ENCODE measurements at regions of chr17 and their contacts with region 1.

Region 1: GRCh38 chr17:59668816-59669215 is 38.4 kb downstream of the PTRH2 start:
- DNase-seq: no peak
- ATAC-seq: peak in 3 of 8 donors; percentile 29 to 63 (median 35)
- H3K4me3 ChIP-seq: no peak overlapping the region
- H3K27ac ChIP-seq: peak overlapping the region in 4 of 10 donors; percentile 8 to 60 (median 36)
- H3K4me1 ChIP-seq: peaks cover 0 to 48% (median 17%) of the 10 kb centered on the region in 9 donors
- H3K27me3 ChIP-seq: no peaks in the 10 kb centered on the region
- CTCF ChIP-seq: no peak

Region 2: DNA sequence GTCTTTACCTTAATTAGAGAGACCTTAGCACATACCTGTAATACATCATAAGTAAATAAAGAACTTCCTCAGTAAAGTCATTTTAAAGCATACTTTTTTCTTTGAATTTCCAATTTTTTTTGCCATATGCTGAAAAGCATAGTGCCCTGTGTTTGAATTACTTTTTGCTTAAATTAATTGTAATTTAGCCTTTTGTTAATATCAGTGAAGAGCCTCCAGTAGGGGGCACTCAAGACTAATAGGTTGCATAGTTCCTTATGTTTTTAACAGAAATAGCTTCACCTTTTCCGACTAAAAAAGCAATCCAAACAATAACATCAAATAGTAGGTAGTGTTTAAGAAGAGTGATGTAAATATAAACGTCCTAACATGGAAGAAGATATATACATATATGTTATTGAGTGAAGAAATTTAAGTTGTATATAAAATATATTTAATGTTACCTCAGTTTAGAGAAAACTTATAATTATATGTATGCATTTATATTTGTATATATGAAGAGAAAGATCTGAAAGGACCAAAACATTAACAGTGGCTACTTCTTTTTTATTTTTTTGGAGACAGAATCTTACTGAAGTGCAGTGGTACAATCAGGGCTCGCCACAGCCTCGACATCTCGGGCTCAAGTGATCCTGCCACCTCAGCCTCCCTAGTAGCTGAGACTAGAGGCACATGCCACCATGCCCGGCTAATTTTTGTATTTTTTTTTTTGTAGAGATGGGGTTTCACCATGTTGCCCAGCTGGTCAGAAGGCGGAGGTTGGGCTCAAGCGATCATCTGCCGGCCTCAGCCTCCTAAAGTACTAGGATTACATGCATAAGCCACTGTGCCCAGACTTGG is 957.7 kb before region 1 on chr17:
- intact Hi-C with region 1: loop called in 1 of 10 experiments (anchors 5 kb)
- DNase-seq: peak in 1 of 2 donors; percentile 21
- ATAC-seq: no peak
- H3K4me3 ChIP-seq: no peak overlapping the region
- H3K27ac ChIP-seq: no peak overlapping the region
- H3K4me1 ChIP-seq: no peaks in the 10 kb centered on the region
- H3K27me3 ChIP-seq: no peaks in the 10 kb centered on the region
- CTCF ChIP-seq: peak; percentile 40 to 83 (median 74)

Region 3: GRCh38 chr17:59651346-59651745 is 17.5 kb before region 1 on chr17:
- intact Hi-C with region 1: loop called in 1 of 10 experiments (anchors 1 kb)
- DNase-seq: no peak
- ATAC-seq: no peak
- H3K4me3 ChIP-seq: no peak overlapping the region
- H3K27ac ChIP-seq: no peak overlapping the region
- H3K4me1 ChIP-seq: peaks cover 0 to 19% (median 8%) of the 10 kb centered on the region in 9 donors
- H3K27me3 ChIP-seq: no peaks in the 10 kb centered on the region
- CTCF ChIP-seq: no peak

Region 4: DNA sequence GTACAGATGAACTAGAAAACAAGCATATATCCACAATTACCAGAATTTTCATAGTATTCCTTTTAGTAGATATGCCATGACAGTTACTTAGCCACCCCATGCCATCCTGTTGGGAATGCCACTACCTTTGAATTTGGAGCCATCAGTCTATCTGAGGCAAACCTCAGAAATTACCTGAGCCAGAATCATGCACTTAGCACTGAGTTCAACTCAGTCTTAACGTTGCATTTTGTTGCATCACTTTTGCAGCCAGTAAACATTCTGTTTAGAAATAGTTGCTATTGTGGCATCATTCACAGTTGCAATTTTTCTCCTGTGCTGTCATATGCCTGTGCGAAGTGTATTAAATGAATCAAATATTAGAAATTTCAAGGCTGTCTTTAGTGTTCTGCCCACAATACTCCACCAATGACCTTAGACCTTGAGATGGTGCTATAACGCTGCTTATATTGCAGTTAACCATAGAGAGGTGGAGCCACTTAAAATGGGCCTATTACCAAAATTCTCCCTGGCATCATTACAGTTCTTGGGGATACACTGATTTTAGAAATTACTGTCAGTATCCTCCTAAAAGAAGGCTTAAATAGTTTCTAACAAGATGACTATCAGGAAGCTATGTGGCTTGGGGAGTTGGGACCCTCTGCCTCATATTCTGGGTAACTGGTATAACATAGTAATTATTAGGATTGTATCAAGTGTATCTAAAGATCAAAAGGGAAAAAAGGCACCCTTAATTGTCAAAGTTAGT is 27.3 kb after region 1 on chr17:
- intact Hi-C with region 1: loop called in 1 of 10 experiments (anchors 5 kb)
- DNase-seq: no peak
- ATAC-seq: no peak
- H3K4me3 ChIP-seq: no peak overlapping the region
- H3K27ac ChIP-seq: no peak overlapping the region
- H3K4me1 ChIP-seq: peaks cover 0 to 4% (median 0%) of the 10 kb centered on the region in 9 donors
- H3K27me3 ChIP-seq: no peaks in the 10 kb centered on the region
- CTCF ChIP-seq: no peak

Region 5: DNA sequence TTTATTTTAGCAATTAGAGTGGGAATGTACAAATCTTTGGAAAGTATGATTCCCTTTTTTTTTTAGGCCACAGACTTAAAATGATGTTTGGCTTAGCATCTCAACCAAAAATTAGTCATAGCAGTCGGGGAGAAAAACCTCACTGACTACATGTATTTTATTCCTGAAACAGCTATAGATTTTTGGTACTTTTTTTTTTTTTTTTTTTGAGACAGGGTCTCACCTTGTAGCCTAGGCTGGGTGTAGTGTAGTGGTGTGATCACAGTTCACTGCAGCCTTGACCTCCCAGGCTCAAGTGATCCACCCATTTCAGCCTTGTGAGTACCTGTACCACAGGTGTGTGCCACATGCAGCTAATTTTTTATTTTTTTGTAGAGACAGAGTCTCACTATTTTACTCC is 272.3 kb after region 1 on chr17:
- intact Hi-C with region 1: loop called in 1 of 10 experiments (anchors 10 kb)
- DNase-seq: no peak
- ATAC-seq: no peak
- H3K4me3 ChIP-seq: no peak overlapping the region
- H3K27ac ChIP-seq: no peak overlapping the region
- H3K4me1 ChIP-seq: no peaks in the 10 kb centered on the region
- H3K27me3 ChIP-seq: no peaks in the 10 kb centered on the region
- CTCF ChIP-seq: no peak